GM18951 (cell line): ENCODE measurements at regions of chr20 and their contacts with region 1.

Region 1: DNA sequence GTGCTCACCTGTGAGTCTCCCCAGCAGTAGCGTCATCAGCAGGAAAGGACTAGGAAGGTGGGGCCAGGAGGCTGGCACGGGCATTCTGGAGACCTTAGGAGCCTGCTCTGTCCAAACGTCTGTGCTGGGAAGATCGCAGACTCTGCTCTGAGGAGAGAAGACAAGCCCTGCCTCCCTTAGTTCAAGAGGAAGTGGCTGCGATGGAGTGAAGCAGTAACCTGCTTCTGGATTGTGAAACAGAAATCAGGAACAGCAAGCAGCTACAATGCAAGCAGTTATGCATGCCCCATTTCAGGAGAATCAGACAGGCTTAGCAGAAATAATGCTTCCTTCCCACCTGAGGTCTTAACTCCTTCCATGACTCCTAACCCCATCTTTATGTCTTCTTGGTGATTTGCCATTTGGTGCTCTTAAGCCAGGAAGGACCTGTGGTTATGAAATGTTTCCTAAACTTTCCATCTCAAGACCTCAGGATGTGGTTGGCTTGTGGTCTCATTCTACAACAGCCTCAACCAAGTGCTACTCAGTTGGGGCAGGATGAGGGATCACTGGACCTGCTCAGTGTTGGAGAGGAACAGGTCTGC is at the start of gene SIRPB1:
- POLR2A ChIP-seq: no peak

Region 2: DNA sequence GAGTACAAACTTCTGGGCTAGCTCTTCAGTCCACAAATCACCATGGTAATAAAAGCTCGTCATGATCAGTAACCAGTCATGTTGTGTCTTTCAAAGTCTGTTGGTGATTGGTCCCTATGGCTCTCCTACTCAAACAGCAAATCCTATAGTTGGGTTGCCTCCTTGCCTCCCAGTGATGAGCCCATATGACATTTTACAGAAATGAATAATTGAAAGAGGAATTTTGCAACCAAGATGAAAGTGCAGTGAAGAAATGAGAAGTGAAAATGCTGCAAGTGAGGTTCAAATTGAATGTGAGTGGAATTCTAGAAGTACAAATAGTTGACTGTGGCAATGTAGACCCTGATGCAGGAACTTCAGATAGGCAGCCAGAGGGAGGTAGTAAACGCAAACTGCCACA is 57.3 kb before region 1 on chr20:
- in situ Hi-C with region 1: loop called (anchors 5 kb)
- POLR2A ChIP-seq: no peak

Region 3: DNA sequence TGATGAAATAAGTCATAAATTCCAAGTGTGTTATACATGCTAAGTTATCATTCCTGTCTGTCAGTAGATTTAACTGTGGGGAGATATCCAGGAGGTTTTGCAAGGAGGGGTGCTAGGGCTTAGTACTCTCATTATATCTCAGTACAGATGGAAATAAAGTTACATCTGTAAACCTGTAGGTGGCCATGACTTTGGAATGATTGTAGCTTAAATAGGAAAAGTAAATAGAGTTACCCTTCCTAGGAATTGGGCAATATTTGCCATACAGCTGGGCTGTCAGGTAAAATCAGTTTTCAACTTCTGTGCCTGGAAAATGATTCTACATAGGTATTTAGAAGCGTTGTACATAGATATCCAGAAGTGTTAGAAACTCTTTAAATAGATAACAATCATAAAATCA is 656.1 kb after region 1 on chr20:
- in situ Hi-C with region 1: no loop called
- POLR2A ChIP-seq: no peak